Activated CD4-positive, alpha-beta memory T cell treated with anti-CD3 and anti-CD28 coated beads for 36 hours (primary cell): ENCODE measurements at regions of chr12 and their contacts with region 1.

Region 1: GRCh38 chr12:68482660-68483059 is 128.0 kb upstream of the RAP1B start:
- DNase-seq: peak; percentile 49
- H3K4me3 Mint-ChIP-seq: no peak overlapping the region
- H3K27ac Mint-ChIP-seq: peak overlapping the region; percentile 94
- H3K4me1 Mint-ChIP-seq: peaks cover 50% of the 10 kb centered on the region
- H3K27me3 Mint-ChIP-seq: no peaks in the 10 kb centered on the region

Region 2: DNA sequence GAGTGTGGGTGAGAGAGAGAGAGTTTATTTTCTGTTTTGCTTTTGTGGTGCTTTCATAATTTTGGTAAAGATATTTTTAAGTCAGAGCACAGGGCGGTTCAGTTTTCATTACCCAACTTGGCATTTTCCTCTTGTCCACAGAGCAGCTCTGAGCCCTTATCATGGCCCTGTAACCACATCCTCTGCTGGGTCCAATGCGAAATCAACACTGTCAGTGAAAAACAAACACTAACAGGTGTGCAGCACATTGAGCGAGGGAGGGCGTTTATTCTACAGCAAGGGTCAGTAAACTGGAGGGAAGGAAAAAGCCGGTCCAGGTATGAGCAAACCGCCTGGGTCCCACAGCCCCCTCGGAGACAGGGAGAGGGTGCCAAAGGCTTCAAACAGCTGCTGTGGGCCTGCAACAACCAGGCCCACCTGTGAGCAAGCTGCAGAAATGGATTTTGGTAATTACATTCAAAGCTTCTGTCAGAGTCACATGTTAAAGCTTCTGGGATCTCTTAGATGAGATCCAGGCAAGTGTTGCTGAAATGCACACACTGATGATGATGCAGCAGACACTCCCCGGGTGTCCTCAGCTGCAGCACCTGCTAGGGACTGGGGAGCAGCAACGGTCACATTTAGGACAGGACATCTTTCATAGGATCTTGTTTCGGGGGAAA is 966.9 kb before region 1 on chr12:
- CTCF ChIA-PET with region 1: no interaction called
- POLR2A ChIA-PET with region 1: no interaction called
- intact Hi-C with region 1: no loop called
- DNase-seq: peak; percentile 38
- H3K4me3 Mint-ChIP-seq: peak overlapping the region; percentile 2
- H3K27ac Mint-ChIP-seq: peak overlapping the region; percentile 50
- H3K4me1 Mint-ChIP-seq: peaks cover 47% of the 10 kb centered on the region
- H3K27me3 Mint-ChIP-seq: no peaks in the 10 kb centered on the region

Region 3: DNA sequence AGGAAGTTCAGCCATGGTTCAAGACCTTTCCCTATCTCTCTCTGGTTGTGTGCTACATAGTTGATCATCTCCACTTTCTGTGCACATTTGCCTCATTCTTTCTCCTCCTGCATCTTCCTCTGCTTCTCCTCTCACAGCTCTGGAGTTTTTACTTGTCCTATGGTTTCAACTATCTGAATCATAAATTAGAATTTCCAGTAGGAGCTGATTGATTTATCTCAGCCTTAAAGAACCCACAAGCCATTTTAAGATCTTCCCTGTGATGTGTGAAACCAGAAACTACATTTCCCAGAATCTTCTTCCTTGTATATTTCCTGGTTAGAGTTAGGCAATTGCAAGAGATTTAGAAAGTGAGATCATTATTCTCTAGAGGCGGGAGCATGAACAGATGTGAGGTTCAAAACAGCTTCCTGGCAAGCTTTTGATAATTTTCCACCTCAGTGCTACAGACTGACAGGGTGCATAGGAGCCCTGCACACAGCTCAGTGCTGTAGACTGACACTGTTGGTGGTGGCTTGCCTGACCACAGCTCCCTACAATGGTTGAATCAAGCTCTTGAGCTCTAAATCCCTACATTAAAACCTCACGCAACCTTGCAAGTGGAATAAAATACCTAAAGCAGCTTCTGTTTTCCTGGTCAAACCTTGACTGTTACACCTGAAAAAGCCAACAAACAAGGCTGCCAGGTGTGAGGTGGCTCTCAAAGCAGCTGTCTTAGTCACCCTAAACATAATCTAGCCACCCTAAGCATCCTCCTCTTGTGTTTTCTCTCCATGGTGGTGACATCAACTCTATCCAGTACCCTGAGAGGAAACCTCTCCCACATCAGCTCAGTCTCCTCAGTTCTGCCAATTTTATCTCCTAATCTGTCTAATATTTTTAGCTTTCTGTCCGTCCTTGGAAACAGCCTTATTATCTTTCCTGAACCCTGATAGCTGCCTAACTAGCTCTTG is 301.6 kb before region 1 on chr12:
- CTCF ChIA-PET with region 1: no interaction called
- POLR2A ChIA-PET with region 1: no interaction called
- intact Hi-C with region 1: loop called (anchors 5 kb)
- DNase-seq: peak; percentile 63
- H3K4me3 Mint-ChIP-seq: no peak overlapping the region
- H3K27ac Mint-ChIP-seq: peak overlapping the region; percentile 78
- H3K4me1 Mint-ChIP-seq: peaks cover 54% of the 10 kb centered on the region
- H3K27me3 Mint-ChIP-seq: no peaks in the 10 kb centered on the region

Region 4: DNA sequence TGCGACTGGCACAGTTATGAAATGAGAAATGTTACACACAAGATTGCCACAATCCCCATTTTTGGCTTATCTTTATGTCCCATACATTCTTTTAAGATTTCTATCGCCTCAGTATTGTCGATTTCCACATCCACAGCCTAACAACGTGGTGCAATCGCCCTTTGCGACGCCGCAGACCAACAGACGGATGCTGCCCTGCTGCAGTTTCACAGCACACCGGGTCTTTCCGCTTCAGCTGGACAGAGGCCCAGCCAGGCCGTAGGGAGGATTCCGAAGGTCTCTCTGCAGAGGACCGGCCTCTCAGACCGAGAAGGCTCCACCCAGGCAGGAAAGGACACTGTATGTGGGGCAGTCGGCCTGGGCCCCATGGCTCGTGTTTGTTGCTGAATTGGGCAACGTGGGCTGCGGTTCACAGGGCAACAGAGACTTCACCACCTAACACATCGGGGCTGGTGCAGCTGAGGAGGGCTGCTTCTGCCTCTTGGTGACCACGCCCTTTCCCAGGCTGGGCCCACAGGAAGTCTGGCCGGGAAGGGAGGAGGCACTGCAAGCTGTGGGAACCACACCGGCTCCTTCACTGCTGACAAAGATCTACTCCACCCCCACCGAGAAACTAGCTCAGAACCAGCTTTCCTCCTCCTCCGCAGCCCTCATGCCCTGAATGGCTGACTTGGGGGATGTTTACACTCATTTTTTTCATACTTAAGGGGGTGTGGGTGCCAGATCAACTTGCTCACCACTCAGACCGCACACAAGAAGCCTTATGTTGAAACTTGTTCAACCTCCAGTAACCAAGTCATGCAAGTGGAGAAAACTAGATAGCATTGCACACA is 117.6 kb before region 1 on chr12:
- CTCF ChIA-PET with region 1: interaction called, 3 read pairs
- POLR2A ChIA-PET with region 1: interaction called, 8 read pairs
- intact Hi-C with region 1: loop called (anchors 1 kb)
- DNase-seq: peak; percentile 94
- H3K4me3 Mint-ChIP-seq: peak overlapping the region; percentile 79
- H3K27ac Mint-ChIP-seq: peak overlapping the region; percentile 92
- H3K4me1 Mint-ChIP-seq: peaks cover 53% of the 10 kb centered on the region
- H3K27me3 Mint-ChIP-seq: no peaks in the 10 kb centered on the region

Region 5: GRCh38 chr12:68374307-68374982 is 108.2 kb before region 1 on chr12:
- CTCF ChIA-PET with region 1: interaction called, 3 read pairs
- POLR2A ChIA-PET with region 1: interaction called, 11 read pairs
- intact Hi-C with region 1: loop called (anchors 1 kb)
- DNase-seq: peak; percentile 84
- H3K4me3 Mint-ChIP-seq: peak overlapping the region; percentile 27
- H3K27ac Mint-ChIP-seq: peak overlapping the region; percentile 98
- H3K4me1 Mint-ChIP-seq: peaks cover 45% of the 10 kb centered on the region
- H3K27me3 Mint-ChIP-seq: no peaks in the 10 kb centered on the region

Region 6: GRCh38 chr12:68451261-68452077 is 31.2 kb before region 1 on chr12:
- CTCF ChIA-PET with region 1: interaction called, 4 read pairs
- POLR2A ChIA-PET with region 1: interaction called, 15 read pairs
- intact Hi-C with region 1: loop called (anchors 1 kb)
- DNase-seq: peak; percentile 70
- H3K4me3 Mint-ChIP-seq: peak overlapping the region; percentile 33
- H3K27ac Mint-ChIP-seq: peak overlapping the region; percentile 95
- H3K4me1 Mint-ChIP-seq: peaks cover 85% of the 10 kb centered on the region
- H3K27me3 Mint-ChIP-seq: no peaks in the 10 kb centered on the region

Region 7: DNA sequence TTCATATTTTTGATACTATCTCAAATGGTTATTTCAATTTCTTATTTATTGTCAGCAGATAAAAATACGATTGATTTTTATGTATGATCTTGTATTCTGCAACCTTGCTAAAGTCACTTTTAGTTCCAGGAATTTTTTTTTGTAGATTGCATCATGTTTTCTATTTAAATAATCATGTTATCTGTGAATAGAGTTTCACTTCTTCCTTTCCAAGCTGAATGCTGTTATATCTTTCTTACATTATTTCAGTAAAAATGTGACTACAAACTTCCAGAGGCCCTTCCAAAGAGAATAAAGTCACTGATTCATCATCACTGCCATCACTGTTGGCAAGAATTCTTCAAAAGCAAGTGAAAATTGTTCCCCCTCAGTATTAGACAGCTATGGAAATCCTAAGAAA is 23.3 kb after region 1 on chr12:
- CTCF ChIA-PET with region 1: no interaction called
- POLR2A ChIA-PET with region 1: no interaction called
- intact Hi-C with region 1: no loop called
- DNase-seq: no peak
- H3K4me3 Mint-ChIP-seq: no peak overlapping the region
- H3K27ac Mint-ChIP-seq: no peak overlapping the region
- H3K4me1 Mint-ChIP-seq: peaks cover 9% of the 10 kb centered on the region
- H3K27me3 Mint-ChIP-seq: no peaks in the 10 kb centered on the region

Region 8: DNA sequence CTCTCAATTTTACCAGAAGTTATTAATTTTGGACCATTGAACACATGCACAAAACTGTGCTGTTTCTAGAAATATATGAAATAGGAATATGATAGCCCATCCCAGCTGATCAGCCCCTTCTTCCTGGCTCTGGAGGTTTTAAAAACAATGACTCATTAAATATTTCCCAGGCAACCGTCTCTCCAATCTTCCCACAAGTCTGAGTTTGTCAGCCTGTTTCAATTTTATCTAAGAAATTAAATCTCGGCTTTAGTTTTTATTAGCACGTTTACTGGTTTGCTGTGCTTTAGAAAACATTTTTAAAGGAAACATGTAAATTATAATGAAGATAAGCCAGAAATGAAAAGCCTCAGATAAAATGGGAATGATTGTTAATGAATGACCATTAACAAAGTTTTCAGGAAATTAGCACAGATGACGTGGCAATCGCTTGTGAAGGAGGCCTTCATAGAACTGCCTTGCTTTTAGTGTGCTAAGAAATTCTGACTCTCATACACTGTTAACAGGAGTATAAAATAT is 38.7 kb after region 1 on chr12:
- CTCF ChIA-PET with region 1: no interaction called
- POLR2A ChIA-PET with region 1: no interaction called
- intact Hi-C with region 1: no loop called
- DNase-seq: no peak
- H3K4me3 Mint-ChIP-seq: no peak overlapping the region
- H3K27ac Mint-ChIP-seq: no peak overlapping the region
- H3K4me1 Mint-ChIP-seq: no peaks in the 10 kb centered on the region
- H3K27me3 Mint-ChIP-seq: no peaks in the 10 kb centered on the region

Region 9: GRCh38 chr12:68587448-68587873 is 104.8 kb after region 1 on chr12:
- CTCF ChIA-PET with region 1: no interaction called
- POLR2A ChIA-PET with region 1: interaction called, 3 read pairs
- intact Hi-C with region 1: loop called (anchors 1 kb)
- DNase-seq: peak; percentile 70
- H3K4me3 Mint-ChIP-seq: no peak overlapping the region
- H3K27ac Mint-ChIP-seq: peak overlapping the region; percentile 39
- H3K4me1 Mint-ChIP-seq: peaks cover 34% of the 10 kb centered on the region
- H3K27me3 Mint-ChIP-seq: no peaks in the 10 kb centered on the region